HCT116 (cell line): ENCODE measurements at regions of chr14 and their contacts with region 1.

Region 1: GRCh38 chr14:98906123-98906995 is 365.6 kb downstream of the BCL11B start:
- DNase-seq: peak; percentile 33
- ATAC-seq: peak; percentile 72
- H3K4me3 ChIP-seq: peak overlapping the region in 1 of 2 experiments; percentile 10; a peak in 1 of 4 replicates
- H3K27ac ChIP-seq: no peak overlapping the region
- H3K4me1 ChIP-seq: peaks cover 38 to 39% of the 10 kb centered on the region in 2 experiments
- H3K27me3 ChIP-seq: peaks cover 46% of the 10 kb centered on the region; the same call in 1 of the 2 replicates
- CTCF ChIP-seq: no peak
- POLR2A ChIP-seq: no peak
- RAD21 ChIP-seq: peak; percentile 20; the same call in 1 of the 2 replicates

Region 2: GRCh38 chr14:99026471-99026870 is 120.1 kb after region 1 on chr14:
- CTCF ChIA-PET with region 1: no interaction called
- POLR2A ChIA-PET with region 1: no interaction called
- RAD21 ChIA-PET with region 1: no interaction called
- intact Hi-C with region 1: loop called (anchors 5 kb)
- DNase-seq: peak; percentile 94
- ATAC-seq: peak; percentile 90
- H3K4me3 ChIP-seq: peak overlapping the region; percentile 34 to 38
- H3K27ac ChIP-seq: 0 out of 2 replicates have a peak overlapping the region, but pooled peaks have one; percentile 21
- H3K4me1 ChIP-seq: peaks cover 5 to 12% of the 10 kb centered on the region in 2 experiments; a peak in 2 of 4 replicates
- H3K27me3 ChIP-seq: no peaks in the 10 kb centered on the region
- CTCF ChIP-seq: no peak
- POLR2A ChIP-seq: no peak
- RAD21 ChIP-seq: no peak; the same call in 1 of the 2 replicates

Region 3: GRCh38 chr14:99271951-99272631 is 365.7 kb after region 1 on chr14 and contains the start of gene BCL11B:
- CTCF ChIA-PET with region 1: no interaction called
- POLR2A ChIA-PET with region 1: no interaction called
- RAD21 ChIA-PET with region 1: no interaction called
- intact Hi-C with region 1: loop called (anchors 2 kb)
- DNase-seq: peak; percentile 82
- ATAC-seq: peak; percentile 70
- H3K4me3 ChIP-seq: peak within 1 kb of the TSS; percentile 51 to 64
- H3K27ac ChIP-seq: no peak within 1 kb of the TSS; the same call in 1 of the 2 replicates
- H3K4me1 ChIP-seq: peaks cover 11 to 36% of the 10 kb centered on the region in 2 experiments; a peak in 3 of 4 replicates
- H3K27me3 ChIP-seq: peaks cover 22% of the 10 kb centered on the region
- CTCF ChIP-seq: peak; percentile 25 to 61 (median 54); a peak in 5 of 6 replicates
- POLR2A ChIP-seq: peak; percentile 52
- RAD21 ChIP-seq: peak; percentile 71
- total RNA-seq, gene BCL11B: 1.1 TPM